Activated B cell treated with CpG ODN at 0.5 μM for 24 hours (primary cell): ENCODE measurements at regions of chr7 and their contacts with region 1.

Region 1: GRCh38 chr7:27901028-27901760 is 161.2 kb downstream of the TAX1BP1 start:
- DNase-seq: no peak
- ATAC-seq: peak; percentile 76
- H3K4me3 Mint-ChIP-seq: peak overlapping the region; percentile 46
- H3K27ac Mint-ChIP-seq: peak overlapping the region; percentile 86
- H3K4me1 Mint-ChIP-seq: peaks cover 70% of the 10 kb centered on the region
- H3K27me3 Mint-ChIP-seq: no peaks in the 10 kb centered on the region
- CTCF ChIP-seq: no peak

Region 2: DNA sequence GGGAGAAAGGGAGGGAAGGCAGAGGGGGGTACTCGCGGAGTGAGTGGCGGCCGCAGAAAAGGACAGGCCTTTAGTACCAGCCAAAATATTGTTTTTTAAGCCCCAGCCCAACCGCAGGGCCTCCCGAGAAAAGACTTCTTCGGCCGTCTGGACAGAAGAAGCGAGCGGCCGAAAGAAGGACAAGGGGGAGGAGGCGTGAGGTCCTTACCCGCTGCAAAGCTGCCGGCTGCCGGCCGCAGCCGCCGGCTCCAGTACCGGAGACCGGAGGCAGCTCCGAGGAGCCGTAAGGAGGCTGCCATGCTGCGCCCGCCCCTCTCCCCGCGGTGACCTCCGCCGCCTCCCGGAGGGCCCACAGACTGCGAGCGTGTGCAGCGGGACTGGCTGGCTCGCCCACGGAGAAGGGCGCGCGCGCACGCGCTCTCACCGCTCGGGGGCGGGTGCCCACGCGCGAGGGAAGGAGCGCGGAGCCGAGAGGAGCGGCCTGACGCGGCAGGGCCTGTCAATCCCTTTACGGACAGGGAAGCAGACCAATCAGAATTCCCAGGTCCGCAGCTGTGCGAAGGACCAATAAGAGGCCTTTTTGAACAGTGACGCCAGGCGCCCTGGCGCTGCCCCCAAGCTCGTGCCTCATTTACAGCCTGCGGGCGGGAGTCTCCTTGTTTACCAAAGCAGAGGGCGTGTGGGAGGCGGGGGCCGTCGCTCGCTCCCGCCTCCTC is 238.5 kb before region 1 on chr7 and contains the start of gene HIBADH:
- CTCF ChIA-PET with region 1: interaction called, 3 read pairs
- POLR2A ChIA-PET with region 1: interaction called, 3 read pairs
- intact Hi-C with region 1: loop called (anchors 2 kb)
- DNase-seq: peak; percentile 92
- ATAC-seq: peak; percentile 97
- H3K4me3 Mint-ChIP-seq: peak within 1 kb of the TSS; percentile 85
- H3K27ac Mint-ChIP-seq: peak within 1 kb of the TSS; percentile 81
- H3K4me1 Mint-ChIP-seq: peaks cover 14% of the 10 kb centered on the region
- H3K27me3 Mint-ChIP-seq: no peaks in the 10 kb centered on the region
- CTCF ChIP-seq: no peak
- total RNA-seq, gene HIBADH: 9.8 and 10.0 TPM in 2 replicates

Region 3: DNA sequence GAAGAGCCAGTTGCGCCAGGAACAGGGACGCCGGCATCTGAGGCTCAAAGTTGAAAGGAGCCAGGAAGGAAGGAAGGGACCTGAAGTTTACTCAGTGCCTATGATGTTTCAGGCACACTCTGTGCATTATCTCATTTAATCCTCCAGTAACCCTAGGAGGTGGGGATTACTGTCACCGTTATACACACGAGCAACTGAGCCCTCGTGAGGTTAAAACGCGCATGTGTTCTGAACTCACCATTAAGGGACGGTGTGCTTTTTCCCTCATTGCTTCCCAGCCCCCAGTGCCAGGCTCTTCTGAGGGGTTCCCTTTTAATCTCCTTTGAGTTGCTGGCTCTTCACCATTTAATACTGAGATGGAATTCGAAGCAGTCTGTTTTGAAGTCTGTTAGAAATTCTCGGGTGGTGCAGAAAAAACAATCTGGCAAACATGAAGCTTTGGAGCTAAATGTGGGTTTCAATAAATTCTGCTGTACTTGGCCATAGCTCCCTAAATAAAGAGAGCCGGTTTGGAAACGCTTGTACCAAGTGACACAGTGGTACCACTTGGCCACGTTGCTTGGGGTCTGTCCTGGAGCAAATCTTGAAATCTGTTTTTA is 59.0 kb before region 1 on chr7:
- CTCF ChIA-PET with region 1: no interaction called
- POLR2A ChIA-PET with region 1: no interaction called
- intact Hi-C with region 1: no loop called
- DNase-seq: no peak
- ATAC-seq: no peak
- H3K4me3 Mint-ChIP-seq: no peak overlapping the region
- H3K27ac Mint-ChIP-seq: no peak overlapping the region
- H3K4me1 Mint-ChIP-seq: no peaks in the 10 kb centered on the region
- H3K27me3 Mint-ChIP-seq: no peaks in the 10 kb centered on the region
- CTCF ChIP-seq: no peak